ENCODE measurements at regions of chr4 and their contacts with region 1.

Region 1: GRCh38 chr4:87938746-87939145 is 36.8 kb upstream of the SPP1 start:
- DNase-seq: no peak
- H3K4me3 ChIP-seq: no peak overlapping the region
- H3K27ac ChIP-seq: no peak overlapping the region
- H3K4me1 ChIP-seq: no peaks in the 10 kb centered on the region
- H3K27me3 ChIP-seq: no peaks in the 10 kb centered on the region
- CTCF ChIP-seq: no peak
- EP300 ChIP-seq: no peak
- POLR2A ChIP-seq: no peak

Region 2: GRCh38 chr4:87895964-87896621 is 42.7 kb before region 1 on chr4:
- intact Hi-C with region 1: no loop called
- DNase-seq: no peak
- H3K4me3 ChIP-seq: no peak overlapping the region
- H3K27ac ChIP-seq: no peak overlapping the region
- H3K4me1 ChIP-seq: no peaks in the 10 kb centered on the region
- H3K27me3 ChIP-seq: no peaks in the 10 kb centered on the region
- CTCF ChIP-seq: no peak
- EP300 ChIP-seq: no peak
- POLR2A ChIP-seq: no peak

Region 3: DNA sequence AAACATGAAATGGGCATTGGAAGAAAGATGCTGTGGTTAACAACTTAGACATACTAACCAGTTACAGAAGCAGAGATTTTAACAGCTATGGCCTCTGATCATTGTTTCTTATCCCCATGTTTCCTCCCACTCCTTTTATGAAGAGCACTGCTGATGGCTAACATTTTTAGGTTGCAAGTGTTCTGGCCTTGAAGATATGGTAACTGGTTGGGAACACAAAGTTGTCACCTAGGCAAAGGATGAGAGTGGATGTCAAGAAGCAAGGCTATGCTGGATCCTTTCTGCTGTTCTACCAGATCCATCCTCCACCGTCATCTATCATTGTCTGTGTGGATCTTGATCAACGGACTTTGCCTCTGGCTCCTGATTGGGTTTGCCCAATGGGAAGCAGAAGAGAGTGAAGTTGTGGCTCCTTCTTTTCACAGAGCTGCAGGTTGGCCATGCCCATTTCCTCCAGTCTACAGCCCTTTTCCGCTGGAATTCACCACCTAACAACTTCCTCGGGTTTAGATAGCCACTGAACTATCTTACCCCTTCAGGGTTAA is 12.1 kb before region 1 on chr4:
- intact Hi-C with region 1: loop called in 1 of 4 experiments (anchors 1 kb)
- DNase-seq: no peak
- H3K4me3 ChIP-seq: no peak overlapping the region
- H3K27ac ChIP-seq: no peak overlapping the region
- H3K4me1 ChIP-seq: no peaks in the 10 kb centered on the region
- H3K27me3 ChIP-seq: no peaks in the 10 kb centered on the region
- CTCF ChIP-seq: no peak
- EP300 ChIP-seq: no peak
- POLR2A ChIP-seq: no peak

Measured in ovary (tissue), 10 donors.